Left cardiac atrium (tissue), 4 donors: ENCODE measurements at regions of chr17 and their contacts with region 1.

Region 1: DNA sequence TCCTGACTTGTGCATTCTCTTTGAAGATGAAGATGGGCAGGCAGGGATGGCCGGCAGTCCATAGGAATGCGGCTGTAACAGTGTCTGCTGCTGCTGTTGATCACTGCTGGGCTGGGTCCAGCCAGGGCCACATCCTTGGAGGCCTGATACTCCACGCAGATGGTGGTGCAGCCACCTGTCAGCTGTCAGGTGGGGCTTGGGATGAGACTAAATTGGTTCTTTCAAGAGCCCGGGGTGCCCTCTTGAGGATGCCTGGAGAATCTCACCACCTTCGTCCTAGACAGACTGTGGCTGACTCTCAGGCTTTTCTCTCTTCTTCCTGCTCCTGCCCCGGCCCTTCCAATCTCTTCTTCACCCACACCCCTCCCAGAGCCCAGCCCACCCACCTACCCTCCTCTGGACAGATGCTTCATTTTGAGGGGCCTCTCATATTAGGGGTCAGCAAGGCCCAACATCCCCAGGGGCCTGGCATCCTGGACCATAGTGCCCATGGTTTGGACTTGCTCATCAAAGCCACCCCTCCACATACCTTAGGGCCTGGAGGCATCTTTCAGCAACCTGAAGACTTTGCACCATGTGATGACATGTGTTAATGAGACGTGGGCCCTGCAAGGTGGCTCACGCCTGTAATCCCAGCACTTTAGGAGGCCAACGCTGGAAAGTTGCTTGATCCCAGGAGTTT is 19.1 kb downstream of the OSBPL7 start:
- DNase-seq: no peak
- ATAC-seq: peak; percentile 46 to 70

Region 2: DNA sequence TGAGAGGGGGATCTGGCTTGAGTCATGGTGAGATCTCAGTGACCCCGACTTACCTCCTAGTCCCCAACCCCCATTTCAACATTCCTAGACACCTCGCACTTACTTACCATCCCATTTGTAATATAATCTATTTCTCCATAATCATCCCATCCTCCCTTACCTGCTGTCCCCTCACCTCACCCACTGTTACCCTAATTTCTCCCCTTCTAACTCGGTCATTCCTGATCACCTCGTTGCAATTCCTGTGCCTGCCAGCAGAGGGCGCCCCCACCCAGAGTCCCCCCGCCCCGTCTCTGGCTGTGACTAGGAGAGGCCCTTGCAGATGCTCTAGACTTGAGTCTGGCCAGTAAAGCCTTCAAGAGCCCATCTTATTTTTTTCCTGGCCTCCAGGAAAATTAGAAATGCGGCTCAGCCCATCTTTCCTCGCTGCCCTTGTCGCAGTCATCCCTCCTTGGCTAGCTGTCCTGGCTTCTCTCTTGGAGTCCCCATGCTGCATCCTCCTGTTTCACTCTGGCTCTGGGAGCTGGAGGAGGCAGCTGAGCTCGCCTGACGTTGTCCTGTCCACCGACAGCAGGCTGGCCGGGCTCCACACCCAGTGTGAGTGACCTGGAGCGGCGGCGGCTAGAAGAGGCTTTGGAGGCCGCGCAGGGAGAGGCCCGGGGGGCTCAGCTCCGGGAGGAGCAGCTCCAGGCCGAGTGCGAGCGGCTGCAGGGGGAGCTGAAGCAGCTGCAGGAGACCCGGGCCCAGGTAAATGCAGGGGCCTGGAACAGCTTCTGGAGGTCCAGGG is 103.5 kb before region 1 on chr17:
- intact Hi-C with region 1: loop called in 1 of 2 experiments (anchors 5 kb)
- DNase-seq: peak; percentile 58
- ATAC-seq: no peak